AG04450 (cell line): ENCODE measurements at regions of chr16 and their contacts with region 1.

Region 1: GRCh38 chr16:57091975-57092785 is at the start of gene CPNE2:
- DNase-seq: no peak
- H3K4me3 ChIP-seq: peak within 1 kb of the TSS; percentile 68
- H3K27ac ChIP-seq: no peak within 1 kb of the TSS
- H3K27me3 ChIP-seq: no peaks in the 10 kb centered on the region
- CTCF ChIP-seq: no peak
- polyA plus RNA-seq, gene CPNE2: 26.2 and 34.5 TPM in 2 replicates

Region 2: GRCh38 chr16:57106767-57107166 is 14.6 kb after region 1 on chr16:
- CTCF ChIA-PET with region 1: interaction called, 18 read pairs
- POLR2A ChIA-PET with region 1: no interaction called
- DNase-seq: no peak
- H3K4me3 ChIP-seq: no peak overlapping the region
- H3K27ac ChIP-seq: no peak overlapping the region
- H3K27me3 ChIP-seq: no peaks in the 10 kb centered on the region
- CTCF ChIP-seq: no peak

Region 3: DNA sequence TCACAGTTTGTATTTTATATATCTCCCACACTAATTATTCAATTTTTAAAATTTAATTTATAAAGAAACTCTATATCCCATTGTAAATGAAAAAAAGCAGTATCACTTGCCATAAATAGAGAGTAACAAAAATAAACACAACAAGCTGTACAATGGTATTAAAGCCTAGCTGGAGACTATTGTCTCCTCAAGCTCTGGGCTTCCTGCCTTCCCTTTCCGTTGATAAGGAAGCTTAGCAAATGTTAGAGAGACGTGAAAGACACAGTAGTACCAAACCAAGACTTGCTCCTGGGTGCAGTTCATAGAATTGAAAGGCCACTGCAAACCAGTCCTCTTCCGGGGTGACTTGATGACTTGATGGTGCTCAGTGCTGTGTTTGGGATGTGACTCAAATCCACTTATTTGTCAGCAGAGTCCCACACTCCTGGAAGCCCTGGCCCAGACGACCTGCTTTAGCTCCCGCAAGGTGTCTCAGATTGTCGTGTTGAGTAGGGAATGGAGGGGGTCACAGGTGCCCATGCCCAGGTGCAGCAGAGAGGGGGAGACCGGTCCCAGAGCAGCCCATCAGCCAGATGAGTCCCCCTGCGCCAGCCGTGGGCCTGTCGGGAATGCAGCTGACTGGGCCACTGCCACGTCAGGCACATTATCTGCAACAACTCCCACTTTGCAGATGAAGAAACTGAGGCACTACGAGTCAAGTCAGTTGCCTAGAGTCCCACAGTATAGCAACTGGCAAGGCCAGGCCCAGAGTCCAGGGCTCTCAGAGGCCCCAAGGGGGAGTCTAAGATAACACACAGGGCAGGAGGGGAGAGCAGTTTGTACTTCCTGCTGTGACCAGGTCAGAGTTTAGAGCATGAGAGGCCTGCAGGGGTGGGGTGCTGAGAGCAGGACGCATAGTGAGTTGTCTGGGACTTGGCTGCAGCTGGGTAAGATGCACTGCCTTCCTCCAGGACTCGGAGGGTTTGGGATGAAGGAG is 53.2 kb after region 1 on chr16:
- CTCF ChIA-PET with region 1: interaction called, 10 read pairs
- POLR2A ChIA-PET with region 1: interaction called, 7 read pairs
- DNase-seq: no peak
- H3K4me3 ChIP-seq: no peak overlapping the region
- H3K27ac ChIP-seq: no peak overlapping the region
- H3K27me3 ChIP-seq: no peaks in the 10 kb centered on the region
- CTCF ChIP-seq: no peak

Region 4: GRCh38 chr16:57152096-57153093 is 60.2 kb after region 1 on chr16:
- CTCF ChIA-PET with region 1: interaction called, 15 read pairs
- POLR2A ChIA-PET with region 1: interaction called, 7 read pairs
- DNase-seq: no peak
- H3K4me3 ChIP-seq: no peak overlapping the region
- H3K27ac ChIP-seq: no peak overlapping the region
- H3K27me3 ChIP-seq: no peaks in the 10 kb centered on the region
- CTCF ChIP-seq: no peak

Region 5: GRCh38 chr16:57167953-57168352 is 75.8 kb after region 1 on chr16:
- CTCF ChIA-PET with region 1: interaction called, 18 read pairs
- POLR2A ChIA-PET with region 1: interaction called, 4 read pairs
- DNase-seq: peak; percentile 29
- H3K4me3 ChIP-seq: no peak overlapping the region
- H3K27ac ChIP-seq: no peak overlapping the region
- H3K27me3 ChIP-seq: no peaks in the 10 kb centered on the region
- CTCF ChIP-seq: peak; percentile 83